ENCODE measurements at regions of chr19 and their contacts with region 1.

Region 1: DNA sequence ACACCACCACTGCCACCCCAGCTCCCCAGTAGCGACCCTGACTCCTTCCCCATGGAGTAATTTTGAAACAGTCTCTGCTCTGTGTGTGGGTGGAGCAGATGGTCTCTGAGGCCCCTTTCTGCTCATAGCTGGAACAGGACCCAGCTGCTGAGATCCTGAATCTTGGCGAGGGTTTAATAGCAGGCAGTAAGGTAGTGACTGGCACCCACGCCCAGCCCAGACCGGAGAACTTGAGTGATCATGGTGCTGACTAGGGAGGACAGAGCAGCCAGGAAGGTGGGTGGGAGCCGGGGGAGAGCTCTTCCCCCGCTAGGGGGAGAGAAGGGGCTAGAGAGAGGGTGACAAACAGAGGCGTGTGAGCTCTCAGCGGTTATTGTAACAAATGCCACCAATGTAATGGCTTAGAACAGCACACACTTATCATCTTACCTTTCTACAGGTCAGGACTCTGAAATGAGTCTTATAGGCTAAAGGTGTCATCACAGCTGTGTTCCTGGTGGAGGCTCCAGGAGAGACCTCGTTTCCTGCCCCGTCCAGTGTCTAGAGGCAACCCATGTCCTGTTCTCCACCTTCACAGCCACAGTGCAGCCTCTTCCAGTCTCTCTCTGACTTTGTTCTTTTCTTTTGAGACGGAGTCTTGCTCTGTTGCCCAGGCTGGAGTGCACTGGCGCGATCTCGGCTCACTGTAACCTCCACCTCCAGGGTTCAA is 7.2 kb upstream of the ACER1 start:
- DNase-seq: no peak

Region 2: GRCh38 chr19:4589579-4590410 is 1750.9 kb before region 1 on chr19:
- intact Hi-C with region 1: loop called in 1 of 2 experiments (anchors 5 kb)
- DNase-seq: no peak

Region 3: DNA sequence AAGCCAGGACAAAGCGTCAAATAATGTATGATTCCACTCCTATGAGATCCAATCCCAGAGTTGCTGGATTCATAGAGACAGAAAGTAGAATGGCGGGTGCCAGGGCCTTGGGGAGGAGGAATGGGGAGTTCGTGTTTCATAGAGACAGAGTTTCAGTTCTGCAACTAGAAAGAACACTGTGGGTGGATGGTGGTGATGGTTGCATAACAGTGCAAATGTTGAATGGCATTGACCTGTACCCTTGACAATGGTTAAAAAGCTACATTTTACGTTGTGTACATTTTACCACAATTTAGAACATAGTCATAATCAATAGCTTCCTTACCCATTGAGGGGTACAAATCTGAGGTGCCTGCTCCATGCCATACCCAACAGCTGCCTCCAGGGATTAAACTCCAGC is 647.2 kb after region 1 on chr19:
- intact Hi-C with region 1: no loop called
- DNase-seq: no peak